ENCODE measurements at regions of chr1 and their contacts with region 1.

Region 1: GRCh38 chr1:8571200-8571984 is 246.0 kb downstream of the RERE start:
- DNase-seq: peak; percentile 94
- H3K4me3 ChIP-seq: peak overlapping the region in 1 of 3 experiments; percentile 19
- H3K27ac ChIP-seq: peak overlapping the region; percentile 93
- H3K4me1 ChIP-seq: peaks cover 27% of the 10 kb centered on the region
- H3K27me3 ChIP-seq: no peaks in the 10 kb centered on the region
- CTCF ChIP-seq: peak; percentile 28 to 61
- POLR2A ChIP-seq: peak; percentile 31

Region 2: GRCh38 chr1:8396786-8397406 is 174.5 kb before region 1 on chr1:
- CTCF ChIA-PET with region 1: interaction called, 3 read pairs
- POLR2A ChIA-PET with region 1: no interaction called
- dilution Hi-C with region 1: no loop called
- intact Hi-C with region 1: loop called (anchors 5 kb)
- DNase-seq: peak; percentile 71
- H3K4me3 ChIP-seq: no peak overlapping the region
- H3K27ac ChIP-seq: peak overlapping the region; percentile 62
- H3K4me1 ChIP-seq: peaks cover 49% of the 10 kb centered on the region
- H3K27me3 ChIP-seq: no peaks in the 10 kb centered on the region
- CTCF ChIP-seq: no peak
- POLR2A ChIP-seq: no peak

Region 3: DNA sequence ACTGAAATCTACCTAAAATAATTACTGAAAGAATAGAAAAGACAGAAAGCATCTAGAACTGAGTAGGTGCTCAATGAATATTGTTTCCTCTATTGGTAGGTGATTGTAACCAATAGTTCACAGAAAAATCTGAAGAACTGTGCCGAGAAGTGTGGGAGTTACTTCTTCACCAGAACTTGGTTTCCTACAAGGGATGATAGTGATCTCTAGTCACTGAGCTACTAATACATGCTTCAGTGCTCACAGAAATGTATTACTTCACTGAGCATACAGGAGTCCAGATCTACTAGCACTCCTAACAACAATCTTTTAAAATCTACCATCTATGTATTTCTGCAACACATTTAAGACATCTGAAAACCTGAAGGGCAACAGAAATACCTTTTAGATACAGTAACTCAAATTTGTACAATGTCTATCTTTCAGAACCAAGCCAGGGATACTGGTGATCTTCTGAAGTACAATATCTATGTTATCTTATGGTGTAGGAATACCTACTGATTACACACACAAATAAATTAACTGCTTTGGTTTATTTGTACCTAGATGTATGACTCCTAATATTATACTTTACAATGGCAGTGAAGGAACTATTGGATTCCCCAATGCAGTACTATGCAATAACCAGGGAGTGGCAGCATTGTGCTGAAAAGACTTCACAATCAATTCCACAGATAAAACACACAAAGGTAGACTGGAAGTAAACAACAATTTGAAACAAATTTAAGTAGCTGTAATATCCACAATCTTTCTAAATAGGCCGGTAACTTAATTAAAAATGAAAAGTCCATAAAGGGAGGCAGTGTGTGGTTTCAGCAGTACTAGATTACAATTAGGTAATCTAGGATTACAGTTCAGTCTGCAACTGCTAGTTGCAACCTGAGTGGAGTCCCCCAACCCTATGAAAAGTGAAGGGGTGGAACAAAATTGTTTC is 10.5 kb before region 1 on chr1:
- CTCF ChIA-PET with region 1: interaction called, 39 read pairs
- POLR2A ChIA-PET with region 1: no interaction called
- dilution Hi-C with region 1: no loop called
- intact Hi-C with region 1: no loop called
- DNase-seq: peak; percentile 64
- H3K4me3 ChIP-seq: no peak overlapping the region
- H3K27ac ChIP-seq: no peak overlapping the region
- H3K4me1 ChIP-seq: peaks cover 2% of the 10 kb centered on the region
- H3K27me3 ChIP-seq: no peaks in the 10 kb centered on the region
- CTCF ChIP-seq: peak; percentile 58 to 66
- POLR2A ChIP-seq: no peak

Region 4: GRCh38 chr1:8702850-8703810 is 131.7 kb after region 1 on chr1:
- CTCF ChIA-PET with region 1: interaction called, 12 read pairs
- POLR2A ChIA-PET with region 1: no interaction called
- dilution Hi-C with region 1: no loop called
- intact Hi-C with region 1: loop called (anchors 1 kb)
- DNase-seq: peak; percentile 96
- H3K4me3 ChIP-seq: peak overlapping the region; percentile 61 to 94 (median 80)
- H3K27ac ChIP-seq: peak overlapping the region; percentile 77
- H3K4me1 ChIP-seq: peaks cover 17% of the 10 kb centered on the region
- H3K27me3 ChIP-seq: no peaks in the 10 kb centered on the region
- CTCF ChIP-seq: peak in 1 of 2 donors; percentile 20
- POLR2A ChIP-seq: peak; percentile 95

Region 5: DNA sequence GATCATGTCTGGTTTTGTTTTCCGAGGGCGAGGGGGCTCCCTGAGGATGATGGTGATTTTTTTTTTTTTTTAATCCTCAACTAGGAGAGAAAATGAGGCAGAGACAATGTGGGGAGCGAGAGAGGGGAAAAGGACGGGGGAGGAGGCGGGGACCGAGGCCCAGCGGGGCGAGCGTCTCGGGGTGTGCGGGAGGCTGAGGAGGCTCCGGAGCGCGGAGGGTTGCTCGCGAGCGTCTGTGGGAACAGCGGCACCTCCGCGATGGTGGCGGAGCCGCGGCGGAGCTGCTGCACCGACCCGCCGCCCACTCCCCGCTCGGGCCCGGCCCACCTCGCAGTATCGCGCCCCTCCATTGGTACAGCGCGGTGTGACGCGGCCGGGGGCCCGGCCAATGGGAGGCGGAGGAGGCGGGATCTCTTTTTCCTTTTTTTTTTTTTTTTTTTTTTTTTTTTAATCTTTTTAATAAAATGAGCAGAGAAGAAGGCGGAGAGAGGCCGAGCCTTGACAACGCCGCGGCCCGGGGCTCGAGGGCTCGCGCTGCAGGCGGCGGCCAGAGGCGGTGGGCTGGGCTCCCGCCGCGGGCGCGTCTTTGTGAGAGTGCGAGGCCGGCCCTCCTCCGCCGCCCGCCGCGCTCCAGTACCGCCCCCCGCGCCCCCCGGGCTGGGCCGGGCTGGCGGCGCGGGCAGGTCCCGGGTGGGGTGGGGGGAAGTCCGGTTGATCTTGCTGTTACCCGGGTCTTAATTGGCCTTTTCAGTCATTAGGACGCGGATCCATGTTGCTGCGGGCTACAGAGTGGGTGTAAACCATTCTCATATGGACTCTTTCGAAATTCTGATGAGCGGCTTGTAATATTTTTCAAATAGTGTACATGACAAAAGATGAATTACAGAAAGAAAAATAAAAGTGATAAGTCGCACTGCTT is 246.3 kb after region 1 on chr1 and contains the start of gene RERE:
- CTCF ChIA-PET with region 1: no interaction called
- POLR2A ChIA-PET with region 1: no interaction called
- dilution Hi-C with region 1: no loop called
- intact Hi-C with region 1: loop called (anchors 2 kb)
- DNase-seq: peak; percentile 95
- H3K4me3 ChIP-seq: peak within 1 kb of the TSS; percentile 84 to 98 (median 91)
- H3K27ac ChIP-seq: peak within 1 kb of the TSS; percentile 92
- H3K4me1 ChIP-seq: peaks cover 60% of the 10 kb centered on the region
- H3K27me3 ChIP-seq: no peaks in the 10 kb centered on the region
- CTCF ChIP-seq: no peak
- POLR2A ChIP-seq: peak; percentile 91
- total RNA-seq, gene RERE: 110 and 113 TPM in 2 replicates

Measured in endothelial cell of umbilical vein (primary cell).